PC-3 (cell line): ENCODE measurements at regions of chr1 and their contacts with region 1.

Region 1: GRCh38 chr1:150613061-150613920 is 16.1 kb downstream of the ENSA start:
- DNase-seq: peak; percentile 98
- ATAC-seq: peak; percentile 86
- H3K4me3 ChIP-seq: peak overlapping the region; percentile 20; the same call in 1 of the 2 replicates
- H3K27ac ChIP-seq: peak overlapping the region; percentile 98
- H3K4me1 ChIP-seq: peaks cover 51% of the 10 kb centered on the region
- H3K27me3 ChIP-seq: no peaks in the 10 kb centered on the region
- CTCF ChIP-seq: no peak

Region 2: GRCh38 chr1:150596095-150596892 is 17.0 kb before region 1 on chr1:
- CTCF ChIA-PET with region 1: no interaction called
- POLR2A ChIA-PET with region 1: interaction called, 20 read pairs
- intact Hi-C with region 1: no loop called
- DNase-seq: peak; percentile 76
- ATAC-seq: peak; percentile 90
- H3K4me3 ChIP-seq: no peak overlapping the region
- H3K27ac ChIP-seq: peak overlapping the region; percentile 84
- H3K4me1 ChIP-seq: peaks cover 11% of the 10 kb centered on the region
- H3K27me3 ChIP-seq: no peaks in the 10 kb centered on the region
- CTCF ChIP-seq: no peak

Region 3: GRCh38 chr1:150876119-150876454 is 262.8 kb after region 1 on chr1:
- CTCF ChIA-PET with region 1: no interaction called
- POLR2A ChIA-PET with region 1: no interaction called
- intact Hi-C with region 1: loop called (anchors 5 kb)
- DNase-seq: peak; percentile 52
- ATAC-seq: peak; percentile 54
- H3K4me3 ChIP-seq: peak overlapping the region; percentile 74
- H3K27ac ChIP-seq: peak overlapping the region; percentile 21
- H3K4me1 ChIP-seq: peaks cover 20% of the 10 kb centered on the region
- H3K27me3 ChIP-seq: no peaks in the 10 kb centered on the region
- CTCF ChIP-seq: no peak